ENCODE measurements at regions of chr7 and their contacts with region 1.

Region 1: DNA sequence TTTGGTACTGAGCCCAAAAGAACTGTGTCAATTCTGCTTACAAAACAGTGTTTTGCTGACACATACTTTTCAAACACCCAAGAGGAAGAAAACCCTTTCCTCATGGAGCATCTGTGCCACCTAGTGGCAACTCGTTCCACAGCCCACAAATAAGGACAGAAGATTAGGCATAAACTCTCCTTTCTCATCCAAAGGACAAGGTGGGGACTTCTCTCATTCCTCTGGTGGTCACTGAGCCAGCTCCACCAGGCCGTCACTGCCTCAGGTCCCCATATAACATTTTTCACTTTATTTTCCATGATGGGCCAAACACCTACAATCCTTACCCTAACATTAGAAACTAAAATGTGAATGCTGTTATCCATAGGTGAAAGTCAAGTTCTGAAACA is 76.9 kb downstream of the RNF216 start:
- DNase-seq: peak; percentile 47 to 79 (median 73)
- ATAC-seq: peak; percentile 42
- H3K4me3 ChIP-seq: no peak overlapping the region
- H3K4me3 Mint-ChIP-seq: no peak overlapping the region
- H3K27ac ChIP-seq: no peak overlapping the region
- H3K27ac Mint-ChIP-seq: peak overlapping the region in 5 of 9 donors; percentile 0 to 67 (median 5)
- H3K4me1 ChIP-seq: peaks cover 18 to 28% of the 10 kb centered on the region in 2 donors
- H3K4me1 Mint-ChIP-seq: peaks cover 28 to 43% (median 36%) of the 10 kb centered on the region in 7 donors
- H3K27me3 ChIP-seq: no peaks in the 10 kb centered on the region
- H3K27me3 Mint-ChIP-seq: peaks cover 0 to under 1% (median 0%) of the 10 kb centered on the region in 5 donors

Region 2: GRCh38 chr7:5248201-5248885 is 456.2 kb before region 1 on chr7:
- CTCF ChIA-PET with region 1: no interaction called
- POLR2A ChIA-PET with region 1: no interaction called
- intact Hi-C with region 1: loop called in 1 of 2 experiments (anchors 10 kb)
- DNase-seq: no peak
- ATAC-seq: peak; percentile 10
- H3K4me3 ChIP-seq: no peak overlapping the region
- H3K4me3 Mint-ChIP-seq: no peak overlapping the region
- H3K27ac ChIP-seq: no peak overlapping the region
- H3K27ac Mint-ChIP-seq: no peak overlapping the region
- H3K4me1 ChIP-seq: no peaks in the 10 kb centered on the region
- H3K4me1 Mint-ChIP-seq: no peaks in the 10 kb centered on the region
- H3K27me3 ChIP-seq: no peaks in the 10 kb centered on the region
- H3K27me3 Mint-ChIP-seq: no peaks in the 10 kb centered on the region

Region 3: DNA sequence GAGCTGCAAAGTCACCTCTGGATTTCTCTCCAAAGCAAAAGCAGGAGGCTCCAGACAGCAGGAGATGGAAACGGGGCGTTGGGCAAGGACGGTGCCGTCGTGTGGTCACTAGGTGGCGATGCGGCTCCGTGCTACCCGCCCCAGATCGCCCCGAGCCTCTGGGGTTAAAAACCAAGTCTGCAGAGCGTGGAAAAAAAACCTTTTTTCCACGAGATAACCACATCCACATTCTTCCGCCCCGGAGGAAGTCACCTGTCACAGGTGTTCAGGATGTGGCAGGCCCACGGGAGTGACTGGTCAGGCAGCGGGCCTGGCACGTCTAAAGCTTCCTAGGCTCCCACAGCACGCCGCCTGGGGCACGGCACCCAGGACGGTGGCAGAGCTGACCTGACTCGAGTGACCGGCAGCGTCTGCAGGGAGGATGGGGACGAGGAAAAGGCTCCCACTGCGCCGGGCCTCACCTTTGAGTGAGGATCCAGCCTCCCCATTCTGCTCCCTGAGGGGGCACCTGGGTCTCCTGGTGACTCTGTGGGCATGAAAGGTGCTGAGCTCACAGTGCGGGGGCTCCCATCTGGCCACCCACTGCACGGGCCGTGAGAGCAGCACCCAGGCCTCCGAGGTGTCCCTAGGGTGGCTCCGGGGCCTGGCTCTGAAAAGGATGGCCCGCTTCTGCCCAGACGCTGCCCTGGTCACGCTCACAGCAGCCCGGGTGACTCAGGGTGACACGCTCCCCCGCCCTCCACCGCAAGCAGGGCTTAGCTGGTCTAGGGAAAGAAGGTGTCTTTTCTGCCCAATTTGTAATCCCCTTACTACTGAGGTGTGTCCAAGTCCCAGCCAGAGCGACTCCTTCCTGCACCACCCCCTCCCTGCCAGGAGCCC is 209.6 kb before region 1 on chr7:
- CTCF ChIA-PET with region 1: interaction called, 49 read pairs
- POLR2A ChIA-PET with region 1: no interaction called
- intact Hi-C with region 1: loop called (anchors 1 kb)
- DNase-seq: peak; percentile 64 to 82 (median 78)
- ATAC-seq: peak; percentile 94
- H3K4me3 ChIP-seq: peak overlapping the region; percentile 4
- H3K4me3 Mint-ChIP-seq: peak overlapping the region; percentile 14 to 67 (median 58)
- H3K27ac ChIP-seq: no peak overlapping the region
- H3K27ac Mint-ChIP-seq: peak overlapping the region in 6 of 9 donors; percentile 8 to 65 (median 47)
- H3K4me1 ChIP-seq: peaks cover 4 to 22% of the 10 kb centered on the region in 2 donors
- H3K4me1 Mint-ChIP-seq: peaks cover 16 to 37% (median 22%) of the 10 kb centered on the region in 7 donors
- H3K27me3 ChIP-seq: no peaks in the 10 kb centered on the region
- H3K27me3 Mint-ChIP-seq: no peaks in the 10 kb centered on the region

Region 4: GRCh38 chr7:5596046-5596895 is 108.3 kb before region 1 on chr7:
- CTCF ChIA-PET with region 1: no interaction called
- POLR2A ChIA-PET with region 1: no interaction called
- intact Hi-C with region 1: no loop called
- DNase-seq: peak in 5 of 9 donors; percentile 16 to 76 (median 33)
- ATAC-seq: peak; percentile 58
- H3K4me3 ChIP-seq: peak overlapping the region; percentile 25
- H3K4me3 Mint-ChIP-seq: peak overlapping the region in 9 of 10 donors; percentile 63 to 86 (median 77)
- H3K27ac ChIP-seq: no peak overlapping the region
- H3K27ac Mint-ChIP-seq: peak overlapping the region in 2 of 9 donors; percentile 43 to 88
- H3K4me1 ChIP-seq: peaks cover 14 to 31% of the 10 kb centered on the region in 2 donors
- H3K4me1 Mint-ChIP-seq: peaks cover 15 to 25% (median 20%) of the 10 kb centered on the region in 7 donors
- H3K27me3 ChIP-seq: peaks cover 0 to 12% of the 10 kb centered on the region in 2 donors
- H3K27me3 Mint-ChIP-seq: peaks cover 16 to 25% (median 21%) of the 10 kb centered on the region in 5 donors

Region 5: DNA sequence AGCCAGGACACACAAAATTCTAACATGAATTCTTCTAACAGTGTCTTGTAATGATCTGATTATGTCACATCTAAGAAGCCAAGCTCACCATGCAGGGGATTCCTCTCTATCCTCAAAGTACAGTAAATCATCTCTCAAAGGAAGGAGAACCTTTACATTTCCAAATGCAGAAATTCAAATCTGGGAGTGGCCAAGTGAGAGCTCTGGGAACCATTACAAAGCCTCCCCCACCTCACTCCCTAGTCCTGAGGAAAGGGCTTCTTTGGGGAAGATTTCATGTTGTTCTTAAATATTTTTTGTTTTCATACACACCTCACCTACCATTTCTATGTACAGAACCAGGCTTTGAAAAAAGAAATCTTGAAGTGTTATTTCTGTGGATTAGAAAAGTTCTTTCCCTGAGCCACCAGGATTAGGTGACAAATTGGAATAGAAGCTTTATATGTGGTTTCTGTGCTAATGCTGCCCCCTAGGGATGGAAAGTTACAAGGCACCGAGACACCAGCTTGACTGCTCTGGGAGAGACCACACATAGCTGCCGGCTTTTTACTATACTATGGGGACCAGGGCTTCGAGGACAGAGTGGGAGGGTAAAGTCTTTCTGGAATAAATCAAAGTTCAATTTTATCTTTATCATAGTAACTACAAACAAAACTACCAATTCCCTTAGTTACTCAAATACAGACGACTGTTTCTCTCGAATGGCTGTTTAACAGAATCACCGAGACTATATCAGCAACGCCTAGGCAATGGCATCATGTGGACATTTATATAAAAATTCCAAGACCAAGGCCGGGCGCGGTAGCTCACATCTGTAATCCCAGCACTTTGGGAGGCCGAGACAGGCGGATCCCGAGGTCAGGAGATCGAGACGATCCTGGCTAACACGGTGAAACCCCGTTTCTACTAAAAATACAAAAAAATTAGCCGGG is 39.2 kb before region 1 on chr7:
- CTCF ChIA-PET with region 1: interaction called, 7 read pairs
- POLR2A ChIA-PET with region 1: interaction called, 4 read pairs
- intact Hi-C with region 1: loop called (anchors 1 kb)
- DNase-seq: peak in 8 of 9 donors; percentile 43 to 71 (median 58)
- ATAC-seq: peak; percentile 84
- H3K4me3 ChIP-seq: no peak overlapping the region
- H3K4me3 Mint-ChIP-seq: no peak overlapping the region
- H3K27ac ChIP-seq: no peak overlapping the region
- H3K27ac Mint-ChIP-seq: peak overlapping the region in 8 of 9 donors; percentile 19 to 93 (median 44)
- H3K4me1 ChIP-seq: peaks cover 0 to 5% of the 10 kb centered on the region in 2 donors
- H3K4me1 Mint-ChIP-seq: peaks cover 6 to 25% (median 24%) of the 10 kb centered on the region in 7 donors
- H3K27me3 ChIP-seq: no peaks in the 10 kb centered on the region
- H3K27me3 Mint-ChIP-seq: no peaks in the 10 kb centered on the region

Region 6: DNA sequence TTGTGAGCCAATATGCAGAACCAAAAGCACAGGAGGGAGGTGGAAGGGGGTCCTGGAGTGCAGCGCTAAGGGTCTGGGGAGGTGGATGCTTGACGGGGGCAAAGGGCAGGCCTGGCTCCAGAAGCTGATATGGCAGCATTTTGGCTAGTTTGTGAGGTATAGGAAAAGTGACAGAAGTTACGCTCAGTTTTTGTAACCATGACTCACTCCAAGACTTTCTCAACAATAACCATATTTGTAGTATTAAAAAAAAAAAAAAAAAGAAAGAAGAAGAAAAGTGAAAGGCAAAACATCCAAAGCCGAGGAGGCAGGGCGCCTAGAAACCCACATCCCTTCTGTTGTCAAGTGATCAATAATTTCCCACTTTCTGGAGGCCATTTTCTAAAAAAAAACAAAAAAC is 15.4 kb before region 1 on chr7:
- CTCF ChIA-PET with region 1: interaction called, 14 read pairs
- POLR2A ChIA-PET with region 1: interaction called, 177 read pairs
- intact Hi-C with region 1: loop called (anchors 1 kb)
- DNase-seq: peak in 7 of 9 donors; percentile 41 to 80 (median 67)
- ATAC-seq: peak; percentile 43
- H3K4me3 ChIP-seq: peak overlapping the region; percentile 23
- H3K4me3 Mint-ChIP-seq: peak overlapping the region; percentile 60 to 94 (median 74)
- H3K27ac ChIP-seq: peak overlapping the region; percentile 74
- H3K27ac Mint-ChIP-seq: peak overlapping the region; percentile 85 to 98 (median 92)
- H3K4me1 ChIP-seq: peaks cover 20 to 88% of the 10 kb centered on the region in 2 donors
- H3K4me1 Mint-ChIP-seq: peaks cover 69 to 95% (median 83%) of the 10 kb centered on the region in 7 donors
- H3K27me3 ChIP-seq: no peaks in the 10 kb centered on the region
- H3K27me3 Mint-ChIP-seq: peaks cover 0 to 4% (median 0%) of the 10 kb centered on the region in 5 donors